Activated naive CD4-positive, alpha-beta T cell treated with anti-CD3 and anti-CD28 coated beads for 36 hours (primary cell): ENCODE measurements at regions of chrX and their contacts with region 1.

Region 1: DNA sequence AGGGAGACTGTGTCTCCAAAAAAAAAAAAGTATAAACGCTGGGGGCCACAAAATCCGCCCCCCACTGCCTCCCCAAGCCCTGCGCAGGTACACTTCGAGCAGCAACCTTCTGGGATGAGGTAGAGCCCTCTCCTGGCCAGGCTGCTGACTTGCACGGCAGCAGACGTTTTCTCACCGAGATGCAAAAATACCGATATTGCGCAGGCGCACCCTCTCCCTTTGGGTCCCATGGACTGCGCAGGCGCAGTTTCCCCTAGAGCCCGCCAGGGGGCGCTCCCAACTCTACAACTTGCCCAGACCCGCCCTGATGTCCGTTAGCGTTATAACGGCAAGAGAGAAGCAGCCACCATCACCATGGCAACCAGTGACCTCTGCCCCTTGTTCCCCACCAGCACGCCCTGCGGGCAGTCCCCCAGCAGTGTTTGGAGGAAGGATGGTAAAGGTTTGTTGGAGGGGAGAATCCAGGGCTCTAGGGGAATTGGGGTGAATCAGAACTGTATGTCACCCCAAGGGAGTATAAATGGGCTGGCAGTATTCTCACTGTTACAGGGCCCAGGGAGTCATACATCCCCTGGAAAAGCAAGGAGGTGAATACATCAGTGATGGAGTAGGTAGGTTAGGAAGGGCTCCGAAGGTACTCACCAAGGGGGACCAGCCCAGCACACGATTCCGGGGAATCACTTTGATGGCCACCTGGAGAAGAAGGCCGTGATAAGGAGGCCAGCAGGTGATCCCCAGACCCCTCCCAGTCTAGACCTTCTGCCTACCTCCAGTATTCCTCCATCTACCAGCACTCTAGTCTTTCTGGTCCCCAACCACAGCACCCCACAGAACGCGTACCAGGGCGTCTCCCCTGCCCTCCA is 1.5 kb downstream of the PIM2 start:
- DNase-seq: peak; percentile 92
- H3K4me3 Mint-ChIP-seq: peak overlapping the region; percentile 95
- H3K27ac Mint-ChIP-seq: peak overlapping the region; percentile 99
- H3K4me1 Mint-ChIP-seq: peaks cover 39% of the 10 kb centered on the region
- H3K27me3 Mint-ChIP-seq: peaks cover 2% of the 10 kb centered on the region

Region 2: GRCh38 chrX:48937054-48937907 is 19.9 kb after region 1 on chrX:
- CTCF ChIA-PET with region 1: interaction called, 42 read pairs
- intact Hi-C with region 1: loop called (anchors 1 kb)
- DNase-seq: peak; percentile 95
- H3K4me3 Mint-ChIP-seq: peak overlapping the region; percentile 75
- H3K27ac Mint-ChIP-seq: peak overlapping the region; percentile 100
- H3K4me1 Mint-ChIP-seq: peaks cover 81% of the 10 kb centered on the region
- H3K27me3 Mint-ChIP-seq: no peaks in the 10 kb centered on the region